Sigmoid colon (tissue), 7 donors: ENCODE measurements at regions of chr12 and their contacts with region 1.

Region 1: DNA sequence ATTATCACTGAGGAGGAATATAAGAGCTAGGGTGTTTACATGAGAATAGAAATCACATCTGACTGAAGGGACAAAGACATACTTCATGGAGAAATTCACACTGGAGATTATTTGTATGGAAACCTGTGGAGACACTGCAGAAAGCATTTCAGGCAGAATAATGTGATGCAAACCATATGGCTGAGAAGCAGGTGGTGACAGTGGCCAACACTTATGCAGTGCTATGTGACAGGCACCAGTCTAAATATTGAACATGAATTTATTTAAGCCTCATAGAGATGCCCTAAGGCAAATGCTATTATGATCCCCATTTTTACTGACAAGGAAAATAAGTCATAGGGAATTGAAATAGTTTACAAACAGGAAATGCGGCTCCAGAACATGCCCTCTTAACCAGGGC is 16.2 kb downstream of the ALG10B start:
- DNase-seq: no peak
- H3K4me3 ChIP-seq: no peak overlapping the region
- H3K27ac ChIP-seq: no peak overlapping the region
- H3K4me1 ChIP-seq: peaks cover 0 to 6% (median 0%) of the 10 kb centered on the region in 4 donors
- H3K27me3 ChIP-seq: no peaks in the 10 kb centered on the region
- CTCF ChIP-seq: no peak
- EP300 ChIP-seq: no peak
- POLR2A ChIP-seq: no peak

Region 2: DNA sequence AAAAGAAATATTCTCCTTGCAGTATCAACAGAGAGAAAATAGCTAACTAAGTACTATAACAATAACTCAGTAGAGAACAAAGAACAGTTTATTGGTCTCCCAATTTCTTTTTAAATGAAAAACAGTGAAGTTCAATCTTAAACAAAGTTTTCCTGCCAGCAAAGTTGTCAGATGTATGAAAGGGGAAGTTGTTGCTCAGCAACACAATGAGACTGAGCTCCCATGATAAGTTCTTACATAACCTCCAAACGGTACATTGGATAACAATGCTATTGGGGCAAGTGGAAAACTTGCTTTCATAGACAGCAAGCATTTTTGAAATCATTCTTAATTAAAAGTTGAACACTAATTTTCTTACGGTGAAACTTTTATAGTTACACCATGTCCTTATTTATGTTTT is 78.6 kb after region 1 on chr12:
- intact Hi-C with region 1: no loop called
- DNase-seq: no peak
- H3K4me3 ChIP-seq: no peak overlapping the region
- H3K27ac ChIP-seq: no peak overlapping the region
- H3K4me1 ChIP-seq: no peaks in the 10 kb centered on the region
- H3K27me3 ChIP-seq: no peaks in the 10 kb centered on the region
- CTCF ChIP-seq: no peak
- EP300 ChIP-seq: no peak
- POLR2A ChIP-seq: no peak

Region 3: DNA sequence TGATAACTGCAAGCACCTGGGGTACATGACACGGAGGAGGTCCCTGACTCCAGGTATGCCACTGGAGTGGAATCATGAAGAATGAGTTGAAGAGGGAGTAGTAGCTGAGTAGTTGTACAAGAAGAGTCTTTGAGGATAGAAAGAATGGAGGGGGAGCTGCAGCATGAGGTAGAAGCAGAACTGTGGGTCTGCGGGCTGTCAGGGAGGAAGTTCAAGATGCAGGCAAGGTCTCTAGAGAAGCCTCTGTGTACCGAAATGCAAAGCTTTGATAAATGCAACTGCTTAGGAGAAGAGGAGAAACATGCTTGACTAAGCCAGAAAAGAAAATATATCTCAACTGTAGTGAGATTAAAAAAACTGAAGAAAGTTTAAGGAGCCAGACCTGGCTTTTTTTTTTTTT is 481.1 kb after region 1 on chr12:
- intact Hi-C with region 1: no loop called
- DNase-seq: no peak
- H3K4me3 ChIP-seq: no peak overlapping the region
- H3K27ac ChIP-seq: no peak overlapping the region
- H3K4me1 ChIP-seq: no peaks in the 10 kb centered on the region
- H3K27me3 ChIP-seq: no peaks in the 10 kb centered on the region
- CTCF ChIP-seq: no peak
- EP300 ChIP-seq: no peak
- POLR2A ChIP-seq: no peak

Region 4: GRCh38 chr12:39103552-39104165 is 770.8 kb after region 1 on chr12:
- intact Hi-C with region 1: loop called (anchors 2 kb)
- DNase-seq: no peak
- H3K4me3 ChIP-seq: no peak overlapping the region
- H3K27ac ChIP-seq: no peak overlapping the region
- H3K4me1 ChIP-seq: no peaks in the 10 kb centered on the region
- H3K27me3 ChIP-seq: no peaks in the 10 kb centered on the region
- CTCF ChIP-seq: peak; percentile 43 to 79 (median 50)
- EP300 ChIP-seq: no peak
- POLR2A ChIP-seq: no peak

Region 5: DNA sequence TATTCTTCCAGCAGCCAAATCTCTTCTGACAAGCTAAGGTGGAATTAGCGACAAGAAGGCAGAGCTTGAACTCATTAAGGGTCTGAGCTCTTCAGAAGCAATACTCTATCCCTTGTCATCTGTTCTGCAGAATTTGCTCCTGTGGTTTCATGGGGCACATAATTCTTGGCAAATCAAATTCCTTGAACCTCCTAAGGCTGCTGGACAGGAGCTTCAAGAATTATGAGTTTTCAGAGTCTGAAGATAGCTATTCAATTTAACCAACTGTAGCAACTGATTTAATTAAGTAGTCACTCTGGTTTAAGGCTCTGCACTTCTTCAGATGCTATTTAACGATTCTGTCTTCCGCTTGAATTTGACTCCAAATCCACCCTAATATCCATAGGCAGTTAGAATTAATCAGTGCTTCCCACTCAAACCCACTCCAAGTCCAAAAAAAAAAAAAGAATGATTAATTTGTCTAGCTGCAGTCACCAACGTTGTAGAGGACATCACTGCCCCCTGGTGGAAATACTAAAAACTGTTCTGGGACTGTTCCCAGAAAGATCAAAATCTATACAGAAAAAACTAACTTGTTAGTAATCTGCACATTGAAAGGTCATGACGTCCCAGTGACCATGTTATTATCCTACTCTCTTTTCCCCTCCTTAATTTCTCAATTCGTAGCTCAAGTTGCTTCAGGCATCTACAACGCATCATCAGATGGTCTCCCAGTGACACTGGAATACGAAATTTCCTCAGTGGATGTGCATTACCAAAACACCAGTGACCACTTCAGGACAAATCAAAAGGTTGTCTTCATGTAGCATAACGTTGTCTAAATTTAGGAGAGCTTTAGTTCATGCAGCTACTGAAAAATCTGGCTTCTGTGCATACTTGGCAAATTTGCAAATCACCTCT is 940.3 kb after region 1 on chr12:
- intact Hi-C with region 1: loop called (anchors 5 kb)
- DNase-seq: no peak
- H3K4me3 ChIP-seq: no peak overlapping the region
- H3K27ac ChIP-seq: no peak overlapping the region
- H3K4me1 ChIP-seq: no peaks in the 10 kb centered on the region
- H3K27me3 ChIP-seq: no peaks in the 10 kb centered on the region
- CTCF ChIP-seq: peak in 1 of 4 experiments; percentile 66
- EP300 ChIP-seq: no peak
- POLR2A ChIP-seq: no peak